ENCODE measurements at regions of chr6 and their contacts with region 1.

Region 1: GRCh38 chr6:129936329-129937165 is 75.4 kb upstream of the TMEM244 start:
- DNase-seq: peak; percentile 59
- ATAC-seq: no peak
- H3K4me3 Mint-ChIP-seq: no peak overlapping the region
- H3K27ac Mint-ChIP-seq: no peak overlapping the region
- H3K4me1 Mint-ChIP-seq: no peaks in the 10 kb centered on the region
- H3K27me3 Mint-ChIP-seq: peaks cover 9% of the 10 kb centered on the region

Region 2: GRCh38 chr6:129893640-129894039 is 42.9 kb before region 1 on chr6:
- CTCF ChIA-PET with region 1: interaction called, 3 read pairs
- POLR2A ChIA-PET with region 1: no interaction called
- intact Hi-C with region 1: loop called in 1 of 2 experiments (anchors 1 kb)
- DNase-seq: no peak
- ATAC-seq: no peak
- H3K4me3 Mint-ChIP-seq: no peak overlapping the region
- H3K27ac Mint-ChIP-seq: no peak overlapping the region
- H3K4me1 Mint-ChIP-seq: peaks cover 10% of the 10 kb centered on the region
- H3K27me3 Mint-ChIP-seq: no peaks in the 10 kb centered on the region

Measured in activated CD4-positive, alpha-beta T cell treated with anti-CD3 and anti-CD28 coated beads for 36 hours (primary cell).